GM12878 (cell line): ENCODE measurements at regions of chr11 and their contacts with region 1.

Region 1: DNA sequence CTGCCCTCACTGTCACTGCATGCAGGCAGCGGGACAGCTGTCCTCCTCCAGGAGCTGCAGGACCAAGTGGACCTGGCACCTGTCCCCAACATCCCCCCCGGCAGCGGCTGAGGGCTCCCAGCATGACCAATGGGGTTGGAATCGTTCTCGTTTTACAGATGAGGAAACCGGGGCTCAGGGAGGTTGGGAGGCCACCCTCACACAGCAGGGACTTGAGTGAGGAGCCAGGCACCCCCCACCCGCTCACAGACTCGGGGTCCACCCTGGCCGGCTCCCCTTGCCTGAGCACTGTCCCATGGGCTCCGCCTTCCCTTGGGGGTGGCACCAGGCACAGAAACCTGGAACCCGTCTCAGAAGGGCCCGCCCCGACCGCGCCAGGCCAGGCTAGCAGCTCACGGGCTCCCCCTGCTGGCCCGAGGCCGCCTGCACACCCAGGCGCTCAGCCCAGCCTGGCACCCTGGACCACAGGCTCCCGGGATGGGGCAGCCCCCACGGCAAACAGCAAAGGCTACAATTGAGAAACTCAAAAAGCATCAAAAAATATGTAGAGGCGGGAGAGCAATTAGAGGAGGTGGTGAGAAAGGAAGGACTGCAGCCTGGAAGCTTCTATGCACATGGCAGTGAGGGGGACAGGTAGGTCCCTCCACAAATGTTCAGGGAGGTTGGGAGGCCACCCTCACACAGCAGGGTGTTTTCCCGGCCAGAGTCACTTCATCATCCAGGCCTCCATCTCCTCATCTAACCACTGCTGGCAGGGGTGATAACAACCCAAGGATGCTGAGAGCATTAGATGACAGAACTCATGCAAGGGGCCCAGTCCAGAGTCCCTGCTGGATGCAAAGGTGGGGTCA is 12.8 kb downstream of the MACROD1 start:
- DNase-seq: no peak
- ATAC-seq: peak; percentile 97
- H3K4me3 ChIP-seq: no peak overlapping the region
- H3K27ac ChIP-seq: no peak overlapping the region
- H3K4me1 ChIP-seq: no peaks in the 10 kb centered on the region
- H3K27me3 ChIP-seq: no peaks in the 10 kb centered on the region
- CTCF ChIP-seq: peak; percentile 91 to 99 (median 99)
- EP300 ChIP-seq: no peak
- POLR2A ChIP-seq: no peak
- RAD21 ChIP-seq: peak; percentile 70

Region 2: DNA sequence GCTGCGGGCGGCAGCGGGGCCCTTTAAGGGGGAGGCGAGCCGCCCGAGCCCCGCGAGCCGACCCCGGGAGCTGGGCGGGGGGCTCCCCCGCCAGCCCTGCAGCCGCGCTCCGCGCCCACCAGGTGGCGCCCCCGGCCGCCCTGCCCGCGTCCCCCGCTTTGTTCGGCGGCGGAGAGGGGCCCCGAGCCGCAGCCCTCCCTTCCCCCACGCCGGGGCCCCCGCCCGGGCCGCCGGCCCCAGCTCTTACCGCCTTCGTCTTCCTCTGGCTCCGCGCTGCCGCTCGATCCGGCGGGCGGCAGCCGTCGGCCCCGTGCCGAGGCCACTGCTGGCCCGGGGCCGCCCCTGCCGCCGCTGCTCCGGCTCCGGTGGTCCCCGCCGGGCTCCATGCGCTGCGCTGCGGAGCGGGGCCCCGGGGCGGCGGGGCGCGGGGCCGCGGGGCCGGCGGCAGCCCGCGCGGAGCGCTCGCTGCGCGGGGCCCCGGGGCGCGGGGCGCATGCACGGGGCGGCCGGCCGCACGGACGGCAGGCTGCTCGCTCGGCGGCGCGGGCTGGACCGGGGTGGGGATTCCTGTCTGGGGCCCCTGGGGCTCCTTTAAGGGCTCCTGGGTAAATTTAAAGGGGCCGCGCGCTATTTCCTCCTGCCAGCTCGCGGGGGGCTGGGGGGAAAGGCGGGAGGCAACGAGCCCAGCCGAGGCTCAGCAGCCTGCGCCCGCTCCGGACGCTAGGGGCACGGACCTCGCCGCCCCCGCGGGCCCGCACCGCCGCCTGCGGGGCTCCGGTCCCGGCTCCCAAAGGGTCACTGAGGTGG is 384.6 kb before region 1 on chr11 and contains the start of gene ZFTA:
- CTCF ChIA-PET with region 1: interaction called, 18 read pairs
- POLR2A ChIA-PET with region 1: no interaction called
- RAD21 ChIA-PET with region 1: interaction called, 4 read pairs
- SMC1A ChIA-PET with region 1: no interaction called
- in situ Hi-C with region 1: no loop called
- intact Hi-C with region 1: loop called (anchors 1 kb)
- DNase-seq: no peak
- ATAC-seq: peak; percentile 68
- H3K4me3 ChIP-seq: peak within 1 kb of the TSS; percentile 86
- H3K27ac ChIP-seq: peak within 1 kb of the TSS; percentile 44
- H3K4me1 ChIP-seq: peaks cover 8% of the 10 kb centered on the region; the same call in 1 of the 2 replicates
- H3K27me3 ChIP-seq: peaks cover 3 to 4% of the 10 kb centered on the region in 2 experiments
- CTCF ChIP-seq: peak; percentile 54 to 74 (median 65); a peak in 5 of 6 replicates
- EP300 ChIP-seq: no peak
- POLR2A ChIP-seq: peak; percentile 29; the same call in 1 of the 2 replicates
- RAD21 ChIP-seq: peak; percentile 75
- polyA plus RNA-seq, gene ZFTA: 0.39 to 0.99 TPM

Region 3: GRCh38 chr11:64000026-64000739 is 152.9 kb before region 1 on chr11:
- CTCF ChIA-PET with region 1: interaction called, 21 read pairs
- POLR2A ChIA-PET with region 1: no interaction called
- RAD21 ChIA-PET with region 1: interaction called, 7 read pairs
- SMC1A ChIA-PET with region 1: interaction called, 3 read pairs
- in situ Hi-C with region 1: loop called (anchors 5 kb)
- intact Hi-C with region 1: loop called (anchors 1 kb)
- DNase-seq: no peak
- ATAC-seq: peak; percentile 87
- H3K4me3 ChIP-seq: no peak overlapping the region
- H3K27ac ChIP-seq: no peak overlapping the region
- H3K4me1 ChIP-seq: no peaks in the 10 kb centered on the region; the same call in 1 of the 2 replicates
- H3K27me3 ChIP-seq: no peaks in the 10 kb centered on the region
- CTCF ChIP-seq: peak; percentile 45 to 74 (median 63); a peak in 5 of 6 replicates
- EP300 ChIP-seq: no peak
- POLR2A ChIP-seq: no peak
- RAD21 ChIP-seq: peak; percentile 64

Region 4: GRCh38 chr11:64100360-64100759 is 52.7 kb before region 1 on chr11:
- CTCF ChIA-PET with region 1: interaction called, 3 read pairs
- POLR2A ChIA-PET with region 1: no interaction called
- RAD21 ChIA-PET with region 1: no interaction called
- SMC1A ChIA-PET with region 1: no interaction called
- in situ Hi-C with region 1: no loop called
- intact Hi-C with region 1: loop called (anchors 5 kb)
- DNase-seq: no peak
- ATAC-seq: peak; percentile 88
- H3K4me3 ChIP-seq: no peak overlapping the region
- H3K27ac ChIP-seq: no peak overlapping the region
- H3K4me1 ChIP-seq: no peaks in the 10 kb centered on the region; the same call in 1 of the 2 replicates
- H3K27me3 ChIP-seq: no peaks in the 10 kb centered on the region; a peak in 1 of 4 replicates
- CTCF ChIP-seq: peak; percentile 35 to 55 (median 52)
- EP300 ChIP-seq: no peak
- POLR2A ChIP-seq: no peak
- RAD21 ChIP-seq: peak; percentile 50